K562 (cell line): ENCODE measurements at regions of chr16 and their contacts with region 1.

Region 1: GRCh38 chr16:75432828-75433731 is at the start of gene CFDP1:
- DNase-seq: peak; percentile 97
- ATAC-seq: peak; percentile 92
- H3K4me3 ChIP-seq: peak within 1 kb of the TSS; percentile 76
- H3K27ac ChIP-seq: peak within 1 kb of the TSS; percentile 95
- H3K4me1 ChIP-seq: peaks cover 6 to 19% of the 10 kb centered on the region in 2 experiments; a peak in 4 of 5 replicates
- H3K27me3 ChIP-seq: no peaks in the 10 kb centered on the region
- CTCF ChIP-seq: peak in 2 of 3 experiments; percentile 8 to 30; a peak in 2 of 6 replicates
- EP300 ChIP-seq: 0 out of 2 replicates have a peak, but pooled peaks have one; percentile 2
- POLR2A ChIP-seq: peak; percentile 80
- RAD21 ChIP-seq: no peak
- polyA plus RNA-seq, gene CFDP1: 33.4 to 61.7 TPM

Region 2: DNA sequence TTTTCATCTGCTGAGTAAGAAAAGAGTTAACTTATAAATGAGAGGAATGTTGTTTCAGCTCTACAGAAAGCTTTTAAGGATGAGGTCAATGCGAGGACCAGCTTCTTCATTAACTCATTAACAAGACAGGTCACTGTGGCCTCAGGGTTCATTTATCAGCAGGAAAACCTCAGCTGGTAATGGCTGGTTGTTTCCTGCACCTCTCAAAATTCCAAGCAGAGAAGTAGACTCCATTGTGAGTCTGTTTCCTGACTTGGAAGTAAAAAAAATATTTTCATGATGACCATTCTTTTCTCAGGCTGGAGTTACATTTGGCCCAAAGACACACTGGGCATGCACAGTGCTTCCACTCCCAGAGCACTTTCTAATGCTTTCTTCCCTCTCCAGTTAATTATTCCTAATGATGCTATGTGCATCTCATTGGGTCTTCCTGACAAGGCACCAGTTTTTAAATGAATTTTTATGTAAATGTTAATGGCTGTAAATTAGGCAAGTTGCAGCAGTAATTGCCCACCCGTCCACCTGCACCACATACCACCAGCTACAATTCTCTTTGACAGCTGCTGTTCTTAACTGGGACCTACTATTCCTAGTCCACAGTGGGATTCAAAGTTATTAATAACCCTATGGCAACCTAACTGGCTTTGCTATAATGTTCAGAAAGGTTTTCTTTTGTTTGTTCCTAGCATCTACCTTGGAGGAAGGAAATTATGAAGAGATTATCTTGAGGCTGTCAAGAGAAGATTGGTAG is 92.2 kb before region 1 on chr16:
- CTCF ChIA-PET with region 1: no interaction called
- POLR2A ChIA-PET with region 1: no interaction called
- in situ Hi-C with region 1: no loop called
- intact Hi-C with region 1: no loop called
- DNase-seq: no peak
- ATAC-seq: no peak
- H3K4me3 ChIP-seq: no peak overlapping the region
- H3K27ac ChIP-seq: no peak overlapping the region
- H3K4me1 ChIP-seq: no peaks in the 10 kb centered on the region
- H3K27me3 ChIP-seq: no peaks in the 10 kb centered on the region
- CTCF ChIP-seq: no peak
- EP300 ChIP-seq: no peak
- POLR2A ChIP-seq: no peak
- RAD21 ChIP-seq: no peak

Region 3: GRCh38 chr16:75420987-75421819 is 11.9 kb before region 1 on chr16:
- CTCF ChIA-PET with region 1: no interaction called
- POLR2A ChIA-PET with region 1: interaction called, 12 read pairs
- in situ Hi-C with region 1: no loop called
- intact Hi-C with region 1: loop called (anchors 1 kb)
- DNase-seq: peak; percentile 26 to 85 (median 46)
- ATAC-seq: peak; percentile 97
- H3K4me3 ChIP-seq: 0 out of 2 replicates have a peak overlapping the region, but pooled peaks have one; percentile 3
- H3K27ac ChIP-seq: peak overlapping the region; percentile 29; the same call in 2 of the 3 replicates
- H3K4me1 ChIP-seq: peaks cover 4 to 8% of the 10 kb centered on the region in 2 experiments; a peak in 4 of 5 replicates
- H3K27me3 ChIP-seq: no peaks in the 10 kb centered on the region
- CTCF ChIP-seq: no peak
- EP300 ChIP-seq: no peak
- POLR2A ChIP-seq: 0 out of 2 replicates have a peak, but pooled peaks have one; percentile 37
- RAD21 ChIP-seq: no peak

Region 4: DNA sequence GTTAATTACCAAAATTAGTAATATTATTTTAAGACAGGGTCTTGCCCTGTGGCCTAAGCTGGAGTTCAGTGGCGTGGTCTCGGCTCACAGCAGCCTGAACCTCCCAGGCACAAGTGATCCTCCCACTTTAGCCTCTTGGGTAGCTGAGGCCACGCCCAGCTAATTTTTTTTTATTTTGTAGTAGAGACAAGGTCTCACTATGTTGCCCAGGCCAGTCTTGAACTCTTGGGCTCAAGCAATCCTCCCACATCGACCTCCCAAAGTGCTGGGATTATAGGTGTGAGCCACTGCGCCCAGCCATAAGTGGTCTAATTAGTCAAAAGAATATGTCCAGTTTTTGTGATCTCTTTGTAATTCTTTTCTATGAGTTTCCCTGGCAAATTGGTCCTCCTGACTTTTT is 12.2 kb after region 1 on chr16:
- CTCF ChIA-PET with region 1: no interaction called
- POLR2A ChIA-PET with region 1: interaction called, 19 read pairs
- in situ Hi-C with region 1: no loop called
- intact Hi-C with region 1: no loop called
- DNase-seq: peak in 1 of 4 experiments; percentile 45
- ATAC-seq: peak; percentile 92
- H3K4me3 ChIP-seq: no peak overlapping the region
- H3K27ac ChIP-seq: no peak overlapping the region
- H3K4me1 ChIP-seq: no peaks in the 10 kb centered on the region; a peak in 2 of 5 replicates
- H3K27me3 ChIP-seq: no peaks in the 10 kb centered on the region
- CTCF ChIP-seq: no peak
- EP300 ChIP-seq: no peak
- POLR2A ChIP-seq: no peak
- RAD21 ChIP-seq: no peak

Region 5: DNA sequence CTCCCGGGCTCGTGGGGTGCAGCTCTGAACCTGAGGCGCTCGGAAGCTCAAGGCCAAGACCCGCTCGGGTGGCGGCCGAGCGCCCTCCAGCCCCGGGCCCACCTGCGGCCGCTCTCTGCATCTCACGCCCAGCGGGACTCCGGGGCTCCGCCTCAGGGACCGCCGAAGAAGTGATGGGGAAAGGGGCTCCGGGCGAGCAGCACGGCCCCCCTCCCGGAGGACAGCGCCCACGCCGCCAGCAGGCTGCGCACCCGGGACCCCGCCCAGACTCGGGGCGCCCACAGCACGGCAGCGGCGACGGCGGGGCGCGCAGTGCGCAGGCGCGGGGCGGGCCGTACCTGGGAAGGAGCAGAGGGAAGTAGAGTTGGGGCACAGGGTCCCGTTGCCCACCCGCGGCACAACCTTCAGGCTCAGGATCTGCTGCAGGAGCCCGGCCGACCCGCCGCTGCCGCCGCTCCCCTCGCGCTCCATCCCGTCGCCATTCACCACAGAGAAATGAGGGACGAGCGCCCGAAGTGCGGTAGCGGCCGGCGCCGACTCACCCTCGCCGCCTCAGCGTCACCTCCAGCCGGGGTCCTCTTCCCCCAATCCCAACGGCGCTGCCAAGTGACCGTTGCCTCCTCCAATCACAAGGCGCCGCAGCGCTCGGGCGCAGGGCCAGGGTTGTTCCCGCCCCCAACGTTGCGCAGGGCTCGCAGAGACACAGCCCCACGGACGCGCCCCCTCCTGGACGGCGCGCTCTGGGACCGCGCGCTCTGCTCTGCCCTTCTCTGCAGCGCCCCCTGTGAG is 31.2 kb after region 1 on chr16 and contains the start of gene TMEM170A:
- CTCF ChIA-PET with region 1: interaction called, 5 read pairs
- POLR2A ChIA-PET with region 1: interaction called, 7 read pairs
- in situ Hi-C with region 1: no loop called
- intact Hi-C with region 1: loop called (anchors 2 kb)
- DNase-seq: peak; percentile 97 to 99 (median 97)
- ATAC-seq: peak; percentile 98
- H3K4me3 ChIP-seq: peak within 1 kb of the TSS; percentile 78
- H3K27ac ChIP-seq: peak within 1 kb of the TSS; percentile 92
- H3K4me1 ChIP-seq: peaks cover 3 to 9% of the 10 kb centered on the region in 2 experiments; a peak in 4 of 5 replicates
- H3K27me3 ChIP-seq: no peaks in the 10 kb centered on the region
- CTCF ChIP-seq: peak; percentile 100
- EP300 ChIP-seq: peak; percentile 22; the same call in 1 of the 2 replicates
- POLR2A ChIP-seq: peak; percentile 97
- RAD21 ChIP-seq: peak; percentile 84 to 87
- polyA plus RNA-seq, gene TMEM170A: 6.1 to 7.3 TPM